BJ (cell line): ENCODE measurements at regions of chr5 and their contacts with region 1.

Region 1: DNA sequence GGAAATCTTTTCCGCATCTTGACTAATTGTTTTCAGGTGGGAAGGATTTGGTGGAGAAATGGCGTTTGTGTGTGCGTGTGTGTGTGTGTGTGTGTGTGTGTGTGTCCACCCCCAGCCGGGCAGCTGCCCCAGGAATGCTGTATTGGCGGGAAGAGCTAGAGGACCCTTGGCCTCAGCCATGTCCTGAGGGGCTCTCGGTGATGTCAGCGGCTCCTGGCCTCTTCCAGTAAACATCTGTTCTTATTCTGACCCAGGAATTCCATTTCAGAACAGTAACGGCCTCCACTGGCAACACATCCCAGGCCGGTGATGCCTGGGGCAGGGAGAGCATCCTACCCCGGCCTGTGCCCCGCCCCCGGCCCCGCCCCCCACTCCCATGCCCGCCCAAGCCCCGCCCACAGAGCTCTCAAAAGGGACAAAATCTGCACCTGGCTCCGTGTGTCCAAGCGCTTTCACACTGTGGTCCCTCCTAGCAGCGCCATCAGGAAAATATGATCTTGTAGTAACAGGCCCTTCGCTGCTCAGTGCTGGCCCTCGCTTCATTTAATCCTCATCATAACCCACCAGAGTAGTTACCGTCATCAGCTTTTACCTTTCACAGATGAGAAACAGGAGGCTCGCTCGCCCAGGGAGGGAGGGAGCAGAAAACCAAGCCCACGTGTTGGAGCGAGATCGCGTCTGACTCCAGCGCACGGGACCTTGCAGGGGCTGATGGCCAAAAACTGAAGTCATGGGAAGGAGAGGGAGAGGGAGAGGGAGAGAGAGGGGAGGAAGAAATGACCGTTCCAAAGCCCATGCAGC is 18.9 kb downstream of the ADAMTS2 start:
- DNase-seq: peak; percentile 96
- H3K4me3 ChIP-seq: no peak overlapping the region
- H3K27me3 ChIP-seq: no peaks in the 10 kb centered on the region
- CTCF ChIP-seq: no peak

Region 2: DNA sequence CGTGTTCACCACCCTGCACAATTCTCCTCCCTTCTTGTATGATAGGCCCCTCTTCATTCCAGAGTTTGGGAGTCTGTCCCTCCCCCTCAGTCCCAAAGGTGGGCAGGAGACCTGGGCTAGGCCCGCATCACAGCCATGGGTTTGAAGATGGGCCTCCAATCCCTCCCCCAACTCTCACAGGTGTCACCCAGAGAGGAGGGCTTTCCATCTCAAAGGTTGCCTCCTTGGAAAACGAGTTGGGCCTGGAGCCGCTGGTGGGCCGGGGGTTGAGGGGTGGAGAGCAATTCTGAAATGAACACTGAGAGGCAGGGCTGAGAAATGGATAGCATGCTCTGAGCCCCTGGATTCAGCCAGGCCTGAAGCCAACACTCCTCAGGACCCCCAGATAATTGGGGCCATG is 12.8 kb after region 1 on chr5:
- CTCF ChIA-PET with region 1: interaction called, 9 read pairs
- POLR2A ChIA-PET with region 1: interaction called, 16 read pairs
- DNase-seq: no peak
- H3K4me3 ChIP-seq: no peak overlapping the region
- H3K27me3 ChIP-seq: no peaks in the 10 kb centered on the region
- CTCF ChIP-seq: no peak

Region 3: DNA sequence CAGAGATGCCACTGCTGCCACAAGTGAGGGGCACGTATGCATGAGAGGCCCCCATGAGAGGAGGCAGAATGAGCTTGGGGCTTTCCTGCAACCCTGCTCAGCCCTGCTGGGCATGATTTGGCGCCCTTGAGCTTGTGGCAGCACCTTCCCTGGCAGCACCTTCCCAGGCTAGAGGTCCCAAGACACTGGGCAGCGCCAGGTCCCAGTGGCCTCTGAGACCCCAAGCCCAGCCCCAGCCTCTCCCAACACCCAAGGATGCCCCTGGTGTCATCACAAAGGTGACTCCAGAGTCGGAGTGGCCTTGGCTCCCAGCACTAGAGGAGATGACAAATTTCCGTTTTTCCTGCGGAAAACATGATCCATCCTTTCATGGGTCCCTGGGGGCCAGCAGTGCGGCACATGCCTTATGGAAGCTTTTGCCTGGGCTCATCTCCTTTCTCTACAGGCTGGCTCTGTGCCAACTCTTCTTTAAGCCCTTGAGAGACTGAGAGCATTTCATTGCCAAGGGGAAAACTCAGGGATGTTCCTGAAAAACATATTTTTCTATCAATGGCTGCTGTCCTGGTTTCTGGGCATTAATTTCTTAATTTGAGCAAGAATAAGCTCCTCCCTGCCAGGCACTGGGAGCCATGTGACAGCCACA is 96.0 kb after region 1 on chr5:
- CTCF ChIA-PET with region 1: no interaction called
- POLR2A ChIA-PET with region 1: no interaction called
- DNase-seq: no peak
- H3K4me3 ChIP-seq: no peak overlapping the region
- H3K27me3 ChIP-seq: no peaks in the 10 kb centered on the region
- CTCF ChIP-seq: no peak

Region 4: DNA sequence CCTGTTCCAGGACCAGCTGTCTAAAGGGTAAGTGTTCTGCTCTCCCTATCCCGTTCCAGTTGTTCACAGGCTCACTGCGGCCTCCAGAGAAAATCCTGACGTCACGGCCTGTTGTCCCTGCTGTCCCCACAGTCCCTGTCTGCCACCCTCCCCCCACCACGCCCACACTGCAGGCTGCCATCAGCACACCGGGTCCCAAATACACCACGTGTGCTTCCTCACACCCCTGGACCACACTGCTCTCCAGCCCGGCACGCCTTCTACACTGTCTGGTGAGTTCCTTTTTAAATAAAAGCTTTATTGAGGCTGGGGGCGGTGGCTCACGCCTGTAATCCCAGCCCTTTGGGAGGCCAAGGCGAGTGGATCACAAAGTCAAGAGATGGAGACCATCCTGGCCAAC is 135.7 kb after region 1 on chr5:
- CTCF ChIA-PET with region 1: no interaction called
- POLR2A ChIA-PET with region 1: no interaction called
- DNase-seq: no peak
- H3K4me3 ChIP-seq: no peak overlapping the region
- H3K27me3 ChIP-seq: no peaks in the 10 kb centered on the region; the same call in 1 of the 2 replicates
- CTCF ChIP-seq: no peak